CD8-positive, alpha-beta T cell (primary cell): ENCODE measurements at regions of chr4 and their contacts with region 1.

Region 1: DNA sequence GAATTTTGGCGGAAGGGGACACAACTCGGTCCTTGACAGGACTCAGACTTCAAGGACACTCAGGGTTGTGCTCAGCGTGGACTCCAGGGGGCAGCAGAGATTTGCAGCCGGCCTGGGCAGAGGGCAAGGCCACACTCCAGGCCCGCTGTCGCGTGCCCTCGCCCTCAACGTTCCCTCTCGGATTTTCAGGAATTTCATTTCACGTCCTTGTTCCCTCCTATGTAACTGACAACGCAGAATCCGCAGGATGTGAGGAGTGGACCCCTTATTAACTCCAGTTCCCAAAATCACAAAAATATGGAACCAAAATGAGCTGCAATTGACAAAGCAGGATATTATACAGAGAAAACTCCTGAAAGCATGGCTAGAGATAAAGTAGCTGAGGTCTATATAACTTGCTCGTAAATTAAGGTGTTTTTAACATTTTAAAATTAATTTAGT is 21.0 kb upstream of the DCTD start:
- DNase-seq: peak; percentile 31 to 76 (median 65)
- ATAC-seq: peak; percentile 74
- H3K4me3 ChIP-seq: no peak overlapping the region
- H3K4me3 Mint-ChIP-seq: no peak overlapping the region
- H3K27ac ChIP-seq: no peak overlapping the region
- H3K27ac Mint-ChIP-seq: no peak overlapping the region
- H3K4me1 ChIP-seq: no peaks in the 10 kb centered on the region
- H3K4me1 Mint-ChIP-seq: peaks cover 7% of the 10 kb centered on the region
- H3K27me3 ChIP-seq: no peaks in the 10 kb centered on the region
- H3K27me3 Mint-ChIP-seq: peaks cover 14% of the 10 kb centered on the region
- CTCF ChIP-seq: peak; percentile 83

Region 2: DNA sequence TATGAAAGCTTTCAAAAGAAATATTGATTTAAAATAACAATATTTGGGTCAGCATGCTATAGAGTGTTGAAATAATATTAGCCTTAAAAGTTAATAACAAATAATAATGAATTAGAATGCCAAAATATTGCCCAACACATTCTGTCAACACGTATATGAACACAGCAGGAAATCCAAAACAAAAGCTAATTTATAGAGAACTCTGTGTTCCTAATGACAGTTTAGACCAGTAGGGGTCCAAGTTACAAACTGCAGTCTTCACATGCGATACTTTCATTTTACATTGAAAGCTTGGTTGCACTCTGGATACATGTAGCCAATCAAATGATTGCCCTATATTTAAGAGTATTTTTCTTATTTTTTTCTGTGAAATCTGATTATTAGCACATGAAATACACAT is 295.4 kb before region 1 on chr4:
- CTCF ChIA-PET with region 1: no interaction called
- POLR2A ChIA-PET with region 1: no interaction called
- intact Hi-C with region 1: no loop called
- DNase-seq: no peak
- ATAC-seq: no peak
- H3K4me3 ChIP-seq: no peak overlapping the region
- H3K4me3 Mint-ChIP-seq: no peak overlapping the region
- H3K27ac ChIP-seq: no peak overlapping the region
- H3K27ac Mint-ChIP-seq: no peak overlapping the region
- H3K4me1 ChIP-seq: no peaks in the 10 kb centered on the region
- H3K4me1 Mint-ChIP-seq: no peaks in the 10 kb centered on the region
- H3K27me3 ChIP-seq: no peaks in the 10 kb centered on the region
- H3K27me3 Mint-ChIP-seq: no peaks in the 10 kb centered on the region
- CTCF ChIP-seq: no peak

Region 3: GRCh38 chr4:183256756-183257385 is 318.6 kb after region 1 on chr4:
- CTCF ChIA-PET with region 1: interaction called, 24 read pairs
- POLR2A ChIA-PET with region 1: no interaction called
- intact Hi-C with region 1: loop called (anchors 1 kb)
- DNase-seq: peak in 8 of 9 experiments; percentile 8 to 62 (median 38)
- ATAC-seq: peak; percentile 63
- H3K4me3 ChIP-seq: no peak overlapping the region
- H3K4me3 Mint-ChIP-seq: no peak overlapping the region
- H3K27ac ChIP-seq: no peak overlapping the region
- H3K27ac Mint-ChIP-seq: no peak overlapping the region
- H3K4me1 ChIP-seq: no peaks in the 10 kb centered on the region
- H3K4me1 Mint-ChIP-seq: no peaks in the 10 kb centered on the region
- H3K27me3 ChIP-seq: no peaks in the 10 kb centered on the region
- H3K27me3 Mint-ChIP-seq: peaks cover 4% of the 10 kb centered on the region
- CTCF ChIP-seq: peak; percentile 57